PC-9 (cell line): ENCODE measurements at regions of chr14 and their contacts with region 1.

Region 1: DNA sequence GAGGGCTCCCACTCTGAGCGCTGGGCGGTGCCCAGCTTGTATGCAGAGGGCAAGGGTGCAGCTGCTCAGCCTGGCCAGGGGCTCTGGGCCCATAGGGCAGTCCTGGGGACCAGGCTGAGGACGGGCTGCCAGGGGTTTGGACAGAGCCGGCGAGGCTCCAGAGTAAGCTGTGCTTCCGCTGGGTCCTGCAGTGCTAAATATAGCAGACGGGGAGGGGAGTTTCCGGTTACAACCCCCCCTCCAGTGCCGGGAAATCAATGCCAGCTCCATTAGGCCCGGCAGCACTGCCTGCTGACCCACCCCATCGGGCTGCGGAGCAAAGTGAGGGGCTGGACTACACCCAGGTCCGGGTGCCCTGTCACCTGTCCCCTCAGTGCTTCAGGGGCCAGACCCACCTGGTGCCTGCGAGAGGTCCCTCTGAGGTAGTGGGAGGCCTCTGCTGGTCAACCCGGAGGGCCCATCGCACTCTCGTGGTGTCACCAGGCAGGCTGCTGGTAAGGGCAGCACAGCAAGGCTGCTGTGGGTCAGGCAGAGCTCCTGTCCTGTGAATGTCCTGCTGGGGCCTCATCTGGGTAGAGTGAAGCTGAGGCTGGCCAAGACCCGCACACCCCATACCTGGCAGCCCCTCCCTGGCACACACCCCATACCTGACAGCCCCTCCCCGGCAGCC is 2.6 kb upstream of the JAG2 start:
- DNase-seq: no peak
- H3K4me3 ChIP-seq: no peak overlapping the region
- H3K27ac ChIP-seq: no peak overlapping the region
- H3K4me1 ChIP-seq: peaks cover 11% of the 10 kb centered on the region
- H3K27me3 ChIP-seq: no peaks in the 10 kb centered on the region
- CTCF ChIP-seq: no peak

Region 2: DNA sequence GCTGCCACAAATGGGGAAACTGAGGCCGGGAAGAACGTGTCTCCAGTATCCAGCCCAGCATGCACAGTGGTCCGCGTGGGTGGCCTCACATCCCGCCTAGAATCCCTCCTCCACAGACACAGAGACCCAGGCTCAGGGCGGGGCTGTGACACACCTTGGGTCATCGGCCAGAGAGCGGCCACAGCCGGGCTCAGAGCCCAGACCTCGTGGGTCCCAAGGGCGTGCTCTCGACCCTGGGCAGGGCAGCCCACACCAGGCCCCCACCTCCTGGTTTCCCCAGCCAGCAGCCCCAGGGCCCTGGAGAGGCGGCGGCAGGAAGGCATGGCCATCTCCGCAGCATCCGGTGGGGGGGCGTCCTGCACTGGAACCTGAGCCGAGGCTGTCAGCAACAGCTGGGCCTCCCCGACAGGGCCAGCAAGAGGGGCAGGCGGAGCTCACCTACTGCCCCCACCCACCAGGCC is 17.8 kb before region 1 on chr14:
- CTCF ChIA-PET with region 1: no interaction called
- POLR2A ChIA-PET with region 1: no interaction called
- intact Hi-C with region 1: no loop called
- DNase-seq: no peak
- H3K4me3 ChIP-seq: no peak overlapping the region
- H3K27ac ChIP-seq: no peak overlapping the region
- H3K4me1 ChIP-seq: no peaks in the 10 kb centered on the region
- H3K27me3 ChIP-seq: no peaks in the 10 kb centered on the region
- CTCF ChIP-seq: no peak

Region 3: GRCh38 chr14:105187935-105188524 is 16.9 kb after region 1 on chr14:
- CTCF ChIA-PET with region 1: no interaction called
- POLR2A ChIA-PET with region 1: interaction called, 43 read pairs
- intact Hi-C with region 1: no loop called
- DNase-seq: no peak
- H3K4me3 ChIP-seq: no peak overlapping the region
- H3K27ac ChIP-seq: no peak overlapping the region
- H3K4me1 ChIP-seq: 0 out of 2 replicates have a peak, but pooled peaks cover 7% of the 10 kb centered on the region
- H3K27me3 ChIP-seq: peaks cover 13% of the 10 kb centered on the region
- CTCF ChIP-seq: peak; percentile 65